Dorsolateral prefrontal cortex (tissue), 120 donors: ENCODE measurements at regions of chr4 and their contacts with region 1.

Region 1: GRCh38 chr4:38612646-38613414 is 51.2 kb upstream of the KLF3 start:
- DNase-seq: no peak
- H3K4me3 ChIP-seq: peak overlapping the region in 1 of 59 donors; percentile 10
- H3K27ac ChIP-seq: peak overlapping the region in 9 of 59 donors; percentile 3 to 48 (median 29)
- H3K27me3 ChIP-seq: no peaks in the 10 kb centered on the region
- CTCF ChIP-seq: no peak

Region 2: GRCh38 chr4:38534344-38535045 is 78.3 kb before region 1 on chr4:
- intact Hi-C with region 1: no loop called
- DNase-seq: no peak
- H3K4me3 ChIP-seq: no peak overlapping the region
- H3K27ac ChIP-seq: no peak overlapping the region
- H3K27me3 ChIP-seq: peaks cover 0 to 5% (median 0%) of the 10 kb centered on the region in 45 donors
- CTCF ChIP-seq: no peak

Region 3: GRCh38 chr4:38574559-38575333 is 38.1 kb before region 1 on chr4:
- intact Hi-C with region 1: loop called in 1 of 2 experiments (anchors 5 kb)
- DNase-seq: peak; percentile 37 to 72 (median 60)
- H3K4me3 ChIP-seq: peak overlapping the region in 52 of 59 donors; percentile 13 to 63 (median 41)
- H3K27ac ChIP-seq: peak overlapping the region in 44 of 59 donors; percentile 1 to 83 (median 55)
- H3K27me3 ChIP-seq: no peaks in the 10 kb centered on the region
- CTCF ChIP-seq: peak in 36 of 56 donors; percentile 6 to 62 (median 30)